ENCODE measurements at regions of chrX and their contacts with region 1.

Region 1: DNA sequence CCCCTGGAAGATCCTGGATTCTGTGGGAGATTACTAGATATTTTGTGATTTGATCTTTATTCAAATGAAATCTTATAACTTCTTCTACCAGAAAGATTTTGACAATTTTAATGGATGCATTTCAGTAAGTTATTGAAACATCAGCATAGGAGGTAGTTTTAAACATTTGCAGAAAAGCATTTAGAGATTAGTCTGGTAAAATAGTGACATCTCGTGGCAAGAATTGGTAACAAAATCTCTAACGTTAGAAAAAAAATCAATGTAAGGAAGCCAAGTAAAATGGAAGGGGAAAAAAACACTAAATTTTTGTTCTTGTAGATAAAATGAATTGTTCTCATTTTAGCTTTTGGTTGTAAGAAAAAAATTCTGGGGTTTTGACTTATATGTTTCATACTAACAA is 73.3 kb downstream of the TASL start:
- DNase-seq: no peak
- ATAC-seq: no peak
- H3K4me3 ChIP-seq: no peak overlapping the region
- H3K27ac ChIP-seq: no peak overlapping the region
- H3K4me1 ChIP-seq: no peaks in the 10 kb centered on the region
- H3K27me3 ChIP-seq: peaks cover 0 to 30% (median 0%) of the 10 kb centered on the region in 7 donors
- CTCF ChIP-seq: peak in 8 of 9 donors; percentile 4 to 58 (median 46)

Region 2: DNA sequence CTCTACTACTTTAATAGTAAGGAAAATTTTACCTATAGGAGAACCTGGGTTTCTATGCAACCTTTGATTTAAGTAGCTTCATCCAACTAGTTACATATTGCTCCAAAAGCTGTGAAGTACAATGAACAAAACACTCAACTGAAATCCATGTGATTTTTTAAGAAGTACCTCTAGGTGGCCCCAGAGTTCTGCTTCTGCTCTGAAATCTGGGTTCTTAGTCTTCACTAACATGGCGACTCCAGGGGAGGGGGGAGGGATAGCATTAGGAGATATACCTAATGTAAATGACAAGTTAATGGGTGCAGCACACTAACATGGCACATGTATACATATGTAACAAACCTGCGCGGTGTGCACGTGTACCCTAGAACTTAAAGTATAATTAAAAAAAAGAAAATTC is 362.3 kb before region 1 on chrX:
- intact Hi-C with region 1: loop called in 3 of 10 experiments (anchors 5 to 10 kb)
- DNase-seq: peak in 1 of 2 donors; percentile 3
- ATAC-seq: no peak
- H3K4me3 ChIP-seq: no peak overlapping the region
- H3K27ac ChIP-seq: no peak overlapping the region
- H3K4me1 ChIP-seq: no peaks in the 10 kb centered on the region
- H3K27me3 ChIP-seq: peaks cover 0 to 7% (median 0%) of the 10 kb centered on the region in 7 donors
- CTCF ChIP-seq: peak in 5 of 9 donors; percentile 13 to 29 (median 27)

Region 3: GRCh38 chrX:30275498-30275897 is 228.8 kb before region 1 on chrX:
- intact Hi-C with region 1: loop called in 6 of 10 experiments (anchors 5 to 10 kb)
- DNase-seq: no peak
- ATAC-seq: no peak
- H3K4me3 ChIP-seq: no peak overlapping the region
- H3K27ac ChIP-seq: no peak overlapping the region
- H3K4me1 ChIP-seq: no peaks in the 10 kb centered on the region
- H3K27me3 ChIP-seq: peaks cover 0 to 31% (median 0%) of the 10 kb centered on the region in 7 donors
- CTCF ChIP-seq: peak in 4 of 9 donors; percentile 18 to 37 (median 26)

Region 4: GRCh38 chrX:30673127-30673796 is 169.0 kb after region 1 on chrX:
- intact Hi-C with region 1: no loop called
- DNase-seq: no peak
- ATAC-seq: no peak
- H3K4me3 ChIP-seq: no peak overlapping the region
- H3K27ac ChIP-seq: no peak overlapping the region
- H3K4me1 ChIP-seq: no peaks in the 10 kb centered on the region
- H3K27me3 ChIP-seq: peaks cover 0 to 7% (median 0%) of the 10 kb centered on the region in 7 donors
- CTCF ChIP-seq: no peak

Region 5: GRCh38 chrX:30735839-30736238 is 231.5 kb after region 1 on chrX:
- intact Hi-C with region 1: no loop called
- DNase-seq: peak; percentile 11 to 18
- ATAC-seq: peak in 1 of 8 donors; percentile 42
- H3K4me3 ChIP-seq: no peak overlapping the region
- H3K27ac ChIP-seq: no peak overlapping the region
- H3K4me1 ChIP-seq: no peaks in the 10 kb centered on the region
- H3K27me3 ChIP-seq: peaks cover 0 to 25% (median 0%) of the 10 kb centered on the region in 7 donors
- CTCF ChIP-seq: peak in 8 of 9 donors; percentile 15 to 75 (median 54)

Region 6: GRCh38 chrX:30981968-30982367 is 477.7 kb after region 1 on chrX:
- intact Hi-C with region 1: no loop called
- DNase-seq: no peak
- ATAC-seq: no peak
- H3K4me3 ChIP-seq: no peak overlapping the region
- H3K27ac ChIP-seq: no peak overlapping the region
- H3K4me1 ChIP-seq: peaks cover 0 to 4% (median 0%) of the 10 kb centered on the region in 9 donors
- H3K27me3 ChIP-seq: peaks cover 0 to 25% (median 0%) of the 10 kb centered on the region in 7 donors
- CTCF ChIP-seq: no peak

Measured in heart right ventricle (tissue), 16 donors.